Common myeloid progenitor, CD34-positive (primary cell): ENCODE measurements at regions of chr20 and their contacts with region 1.

Region 1: GRCh38 chr20:62977613-62978560 is 25.4 kb downstream of the SLC17A9 start:
- DNase-seq: peak; percentile 87 to 98 (median 97)
- H3K4me3 ChIP-seq: peak overlapping the region in 3 of 7 experiments; percentile 14 to 37 (median 15)
- H3K27ac ChIP-seq: no peak overlapping the region
- H3K4me1 ChIP-seq: peaks cover 5 to 70% (median 60%) of the 10 kb centered on the region in 4 experiments
- H3K27me3 ChIP-seq: peaks cover 0 to 30% (median 19%) of the 10 kb centered on the region in 5 experiments

Region 2: GRCh38 chr20:62953839-62954703 is 23.8 kb before region 1 on chr20:
- CTCF ChIA-PET with region 1: interaction called, 12 read pairs
- POLR2A ChIA-PET with region 1: no interaction called
- DNase-seq: peak; percentile 93 to 99 (median 98)
- H3K4me3 ChIP-seq: peak overlapping the region; percentile 11 to 90 (median 67)
- H3K27ac ChIP-seq: peak overlapping the region; percentile 76 to 83
- H3K4me1 ChIP-seq: peaks cover 2 to 77% (median 71%) of the 10 kb centered on the region in 4 experiments
- H3K27me3 ChIP-seq: no peaks in the 10 kb centered on the region

Region 3: DNA sequence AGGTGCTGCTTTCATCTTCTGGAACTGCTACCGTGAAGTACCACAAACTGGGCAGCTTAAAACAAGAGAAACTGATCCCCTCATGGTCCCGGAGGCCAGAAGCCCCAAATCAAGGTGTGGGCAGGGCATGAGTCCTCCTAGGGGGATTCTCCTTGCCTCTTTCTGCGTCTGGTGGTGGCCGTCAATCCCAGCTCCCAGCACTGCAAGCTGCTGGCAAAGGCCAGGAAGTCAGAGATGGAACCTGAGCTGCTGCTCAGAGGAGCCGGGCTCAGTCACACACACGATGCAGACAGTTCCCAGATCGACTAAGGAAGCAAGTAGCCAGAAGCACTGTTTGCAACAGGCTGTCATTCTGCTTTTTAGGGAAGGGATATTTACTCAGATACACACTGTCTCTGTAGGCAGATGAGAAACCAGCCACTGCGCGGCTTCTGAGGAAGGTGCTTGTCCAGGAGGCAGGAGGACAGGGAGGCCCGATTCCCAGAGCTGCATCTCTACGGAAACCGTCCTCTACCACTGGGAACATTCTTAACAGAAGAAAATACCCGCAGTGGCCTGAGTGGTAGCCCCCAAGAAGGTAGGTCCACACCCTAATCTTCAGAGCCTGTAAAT is 13.4 kb after region 1 on chr20:
- CTCF ChIA-PET with region 1: interaction called, 12 read pairs
- POLR2A ChIA-PET with region 1: no interaction called
- DNase-seq: no peak
- H3K4me3 ChIP-seq: no peak overlapping the region
- H3K27ac ChIP-seq: no peak overlapping the region
- H3K4me1 ChIP-seq: peaks cover 0 to 11% (median 7%) of the 10 kb centered on the region in 4 experiments
- H3K27me3 ChIP-seq: peaks cover 0 to 15% (median 0%) of the 10 kb centered on the region in 5 experiments

Region 4: GRCh38 chr20:62999580-62999979 is 21.7 kb after region 1 on chr20:
- CTCF ChIA-PET with region 1: interaction called, 7 read pairs
- POLR2A ChIA-PET with region 1: interaction called, 24 read pairs
- DNase-seq: peak in 2 of 3 donors; percentile 76 to 86
- H3K4me3 ChIP-seq: no peak overlapping the region
- H3K27ac ChIP-seq: no peak overlapping the region
- H3K4me1 ChIP-seq: peaks cover 0 to 25% (median 15%) of the 10 kb centered on the region in 4 experiments
- H3K27me3 ChIP-seq: peaks cover 6 to 46% (median 26%) of the 10 kb centered on the region in 5 experiments

Region 5: GRCh38 chr20:63014710-63015109 is 36.8 kb after region 1 on chr20:
- CTCF ChIA-PET with region 1: no interaction called
- POLR2A ChIA-PET with region 1: no interaction called
- DNase-seq: peak in 1 of 3 donors; percentile 6
- H3K4me3 ChIP-seq: no peak overlapping the region
- H3K27ac ChIP-seq: no peak overlapping the region
- H3K4me1 ChIP-seq: peaks cover 0 to 12% (median 8%) of the 10 kb centered on the region in 4 experiments
- H3K27me3 ChIP-seq: peaks cover 11 to 85% (median 30%) of the 10 kb centered on the region in 5 experiments

Region 6: GRCh38 chr20:63064310-63064709 is 86.4 kb after region 1 on chr20:
- CTCF ChIA-PET with region 1: no interaction called
- POLR2A ChIA-PET with region 1: no interaction called
- DNase-seq: no peak
- H3K4me3 ChIP-seq: no peak overlapping the region
- H3K27ac ChIP-seq: no peak overlapping the region
- H3K4me1 ChIP-seq: no peaks in the 10 kb centered on the region
- H3K27me3 ChIP-seq: peaks cover 0 to 33% (median 3%) of the 10 kb centered on the region in 5 experiments